MCF 10A (cell line): ENCODE measurements at regions of chr5 and their contacts with region 1.

Region 1: GRCh38 chr5:149960272-149961185 is at the start of gene SLC26A2:
- DNase-seq: peak; percentile 100
- H3K4me3 Mint-ChIP-seq: peak within 1 kb of the TSS; percentile 96
- H3K27ac Mint-ChIP-seq: peak within 1 kb of the TSS; percentile 97
- H3K4me1 Mint-ChIP-seq: peaks cover 38% of the 10 kb centered on the region
- H3K27me3 Mint-ChIP-seq: no peaks in the 10 kb centered on the region
- CTCF ChIP-seq: no peak
- total RNA-seq, gene SLC26A2: 44.1 and 56.2 TPM in 2 replicates

Region 2: DNA sequence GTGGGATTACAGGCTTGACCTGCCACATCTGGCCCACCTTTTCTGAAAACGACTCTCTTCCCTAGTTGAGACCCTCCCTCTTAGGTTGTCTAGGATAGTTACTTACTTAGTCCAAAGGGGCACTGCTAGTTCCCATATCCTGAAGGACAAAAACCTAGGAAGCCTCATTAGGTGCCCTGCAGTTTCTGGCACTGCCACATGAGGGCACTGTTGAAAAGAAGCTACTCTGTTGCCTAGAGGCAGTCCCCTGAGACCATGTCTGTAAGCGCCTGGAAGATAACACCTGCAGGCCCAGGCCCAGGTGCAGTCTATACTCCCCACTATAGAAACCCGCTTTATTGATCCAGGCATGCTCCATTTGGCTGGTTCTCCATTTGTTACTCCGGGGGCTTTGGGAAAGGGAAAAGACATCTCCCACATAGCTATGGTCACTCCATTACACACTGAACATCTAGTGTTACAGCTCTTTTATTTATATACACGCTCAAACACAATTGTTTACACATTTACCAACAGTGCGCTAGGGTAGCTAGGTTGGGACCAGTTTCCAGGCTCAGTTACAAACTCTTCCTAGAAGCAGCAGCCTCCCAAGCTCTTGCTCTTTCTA is 303.9 kb before region 1 on chr5:
- CTCF ChIA-PET with region 1: interaction called, 13 read pairs
- POLR2A ChIA-PET with region 1: no interaction called
- intact Hi-C with region 1: no loop called
- DNase-seq: peak; percentile 80
- H3K4me3 Mint-ChIP-seq: no peak overlapping the region
- H3K27ac Mint-ChIP-seq: no peak overlapping the region
- H3K4me1 Mint-ChIP-seq: no peaks in the 10 kb centered on the region
- H3K27me3 Mint-ChIP-seq: peaks cover 21% of the 10 kb centered on the region
- CTCF ChIP-seq: peak; percentile 85

Region 3: DNA sequence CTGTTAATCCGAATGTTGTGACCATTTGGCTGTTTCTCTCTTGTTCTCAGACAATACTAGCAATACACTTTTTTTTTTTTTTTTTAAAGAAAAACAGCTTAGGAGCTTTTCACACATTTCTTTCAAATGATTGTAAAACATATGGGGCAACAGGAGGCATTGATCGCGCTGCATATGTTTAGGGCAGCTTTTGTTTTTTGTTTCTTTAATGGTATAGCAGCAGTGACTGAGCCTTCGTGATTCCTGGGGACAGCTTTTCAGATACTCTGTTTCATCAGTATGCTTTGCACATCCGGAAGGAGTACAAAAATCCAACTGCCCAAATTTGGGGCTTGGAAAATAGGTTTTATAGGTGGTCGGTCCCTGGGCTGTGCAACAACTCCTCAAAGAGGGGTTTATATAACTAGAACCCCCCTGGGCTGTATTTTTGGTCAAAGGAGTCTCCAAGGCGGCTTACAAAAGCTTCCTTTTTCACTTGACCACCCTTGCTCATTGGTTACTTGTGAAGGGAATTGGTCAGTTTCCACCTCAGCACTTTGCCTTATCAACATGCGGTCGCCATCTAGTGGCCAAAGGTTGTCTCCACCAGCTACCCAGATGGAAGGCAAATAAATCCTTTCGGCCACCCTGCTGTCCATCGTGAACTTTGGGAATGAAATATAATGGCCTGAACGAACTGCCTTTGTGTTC is 107.7 kb before region 1 on chr5:
- CTCF ChIA-PET with region 1: interaction called, 1,621 read pairs
- POLR2A ChIA-PET with region 1: interaction called, 186 read pairs
- intact Hi-C with region 1: loop called (anchors 1 kb)
- DNase-seq: peak; percentile 91
- H3K4me3 Mint-ChIP-seq: no peak overlapping the region
- H3K27ac Mint-ChIP-seq: peak overlapping the region; percentile 16
- H3K4me1 Mint-ChIP-seq: peaks cover 17% of the 10 kb centered on the region
- H3K27me3 Mint-ChIP-seq: no peaks in the 10 kb centered on the region
- CTCF ChIP-seq: peak; percentile 87

Region 4: DNA sequence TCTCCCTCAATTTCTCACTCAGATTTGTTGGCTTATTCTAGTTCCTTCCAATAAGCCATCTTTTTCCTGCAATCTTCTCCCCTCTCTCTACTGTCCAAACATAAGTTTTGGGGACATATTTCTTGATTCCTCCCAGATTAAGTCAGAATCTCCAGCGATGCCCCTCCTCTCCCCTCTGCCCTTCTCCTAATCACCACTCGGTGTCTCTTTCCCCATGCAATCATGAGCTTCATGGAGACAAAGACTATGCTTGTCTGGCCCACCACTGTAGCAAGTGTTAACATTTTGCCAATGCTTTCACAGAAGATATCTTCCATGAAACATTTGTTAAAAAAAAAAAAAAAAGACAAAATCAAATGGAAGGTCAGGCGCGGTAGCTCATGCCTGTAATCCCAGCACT is 58.4 kb before region 1 on chr5:
- CTCF ChIA-PET with region 1: interaction called, 117 read pairs
- POLR2A ChIA-PET with region 1: interaction called, 71 read pairs
- intact Hi-C with region 1: loop called (anchors 1 kb)
- DNase-seq: peak; percentile 49
- H3K4me3 Mint-ChIP-seq: no peak overlapping the region
- H3K27ac Mint-ChIP-seq: peak overlapping the region; percentile 34
- H3K4me1 Mint-ChIP-seq: peaks cover 23% of the 10 kb centered on the region
- H3K27me3 Mint-ChIP-seq: no peaks in the 10 kb centered on the region
- CTCF ChIP-seq: peak; percentile 13

Region 5: GRCh38 chr5:149938791-149939358 is 21.7 kb before region 1 on chr5:
- CTCF ChIA-PET with region 1: interaction called, 105 read pairs
- POLR2A ChIA-PET with region 1: interaction called, 138 read pairs
- intact Hi-C with region 1: loop called (anchors 1 kb)
- DNase-seq: peak; percentile 100
- H3K4me3 Mint-ChIP-seq: peak overlapping the region; percentile 55
- H3K27ac Mint-ChIP-seq: peak overlapping the region; percentile 98
- H3K4me1 Mint-ChIP-seq: peaks cover 77% of the 10 kb centered on the region
- H3K27me3 Mint-ChIP-seq: no peaks in the 10 kb centered on the region
- CTCF ChIP-seq: no peak

Region 6: GRCh38 chr5:150000256-150000989 is 39.9 kb after region 1 on chr5 and contains the starts of genes HMGXB3 and TIGD6:
- CTCF ChIA-PET with region 1: interaction called, 12 read pairs
- POLR2A ChIA-PET with region 1: interaction called, 35 read pairs
- intact Hi-C with region 1: no loop called
- DNase-seq: peak; percentile 92
- H3K4me3 Mint-ChIP-seq: peak within 1 kb of the TSS; percentile 82
- H3K27ac Mint-ChIP-seq: peak within 1 kb of the TSS; percentile 95
- H3K4me1 Mint-ChIP-seq: peaks cover 43% of the 10 kb centered on the region
- H3K27me3 Mint-ChIP-seq: no peaks in the 10 kb centered on the region
- CTCF ChIP-seq: no peak
- total RNA-seq, gene HMGXB3: 66.8 and 67.8 TPM in 2 replicates
- total RNA-seq, gene TIGD6: 9.0 and 10.6 TPM in 2 replicates

Region 7: DNA sequence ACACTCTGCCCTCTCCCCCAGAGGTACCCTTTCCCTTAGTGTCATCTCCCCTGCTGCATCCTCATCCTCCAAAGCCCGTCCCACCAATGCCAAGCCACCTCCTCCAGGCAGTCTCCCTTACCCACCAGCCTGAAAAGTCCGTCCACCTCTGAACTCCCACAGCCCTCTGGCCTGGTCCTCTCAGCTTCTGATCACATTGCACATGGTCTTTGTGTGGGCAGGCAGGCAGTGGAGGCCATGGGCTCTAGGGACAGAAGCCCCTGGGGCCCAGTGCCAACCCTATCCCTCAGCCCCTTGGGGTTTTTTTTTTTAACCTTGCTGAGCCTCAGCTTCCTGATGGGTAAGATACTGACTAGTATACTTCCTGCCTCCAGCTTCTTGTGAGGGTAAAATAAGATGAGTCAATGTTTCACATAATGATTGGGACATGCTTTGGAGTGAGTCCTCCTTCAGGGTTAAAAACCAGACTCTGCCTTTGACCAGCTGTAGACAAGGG is 106.4 kb after region 1 on chr5:
- CTCF ChIA-PET with region 1: no interaction called
- POLR2A ChIA-PET with region 1: no interaction called
- intact Hi-C with region 1: no loop called
- DNase-seq: peak; percentile 56
- H3K4me3 Mint-ChIP-seq: no peak overlapping the region
- H3K27ac Mint-ChIP-seq: no peak overlapping the region
- H3K4me1 Mint-ChIP-seq: peaks cover 15% of the 10 kb centered on the region
- H3K27me3 Mint-ChIP-seq: no peaks in the 10 kb centered on the region
- CTCF ChIP-seq: no peak